ENCODE measurements at regions of chr17 and their contacts with region 1.

Region 1: DNA sequence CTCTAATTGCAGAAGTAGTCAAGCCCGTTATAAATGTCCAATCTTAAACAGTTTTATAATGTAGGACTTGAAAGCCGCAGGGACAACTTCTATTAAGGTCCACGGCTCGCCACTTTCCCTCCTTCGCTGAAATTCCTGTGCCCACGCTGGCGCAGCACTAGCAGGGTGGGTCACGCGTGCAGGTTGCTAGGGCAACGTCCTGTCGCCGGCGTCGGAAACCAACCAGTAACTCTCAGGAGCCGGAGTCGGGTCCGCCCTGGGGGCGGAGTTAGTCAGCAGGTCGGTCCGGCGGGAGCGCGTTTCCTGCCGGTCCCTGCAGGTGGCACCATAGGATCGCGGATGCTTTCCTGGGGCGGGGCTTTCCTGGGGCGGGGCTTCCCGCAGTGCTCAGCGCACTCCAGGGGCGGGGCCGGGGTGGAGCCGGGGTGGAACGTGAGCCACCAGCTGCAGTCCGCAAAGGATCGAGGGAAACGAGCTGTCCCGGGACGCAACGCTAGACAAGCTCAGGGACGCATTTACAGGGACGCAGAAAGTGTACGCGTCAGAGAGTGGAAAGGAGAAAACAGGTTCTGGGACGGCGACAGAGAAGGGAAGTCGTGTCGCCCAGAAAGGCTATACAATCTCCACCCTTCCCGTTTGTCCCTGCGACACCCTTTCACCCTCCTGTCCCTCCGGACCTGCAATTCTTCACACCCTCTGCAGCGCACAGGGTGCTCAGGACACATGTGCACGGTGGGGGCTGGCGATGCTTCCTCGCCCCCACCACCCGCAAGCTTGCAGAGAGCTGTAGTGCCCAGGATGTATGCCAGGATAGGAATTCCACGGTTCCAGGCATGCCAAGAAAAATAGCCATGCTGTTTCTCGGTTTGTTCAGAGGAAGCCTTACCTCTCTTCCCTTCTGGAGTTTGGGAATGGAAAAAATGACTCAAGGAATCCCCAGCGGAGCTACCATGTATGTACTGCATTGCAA is 12.4 kb downstream of the COPZ2 start:
- DNase-seq: peak; percentile 95 to 98 (median 96)
- H3K4me3 ChIP-seq: peak overlapping the region; percentile 53 to 81
- H3K4me3 Mint-ChIP-seq: peak overlapping the region; percentile 84 to 96 (median 92)
- H3K27ac ChIP-seq: peak overlapping the region; percentile 32
- H3K27ac Mint-ChIP-seq: peak overlapping the region; percentile 87 to 98 (median 95)
- H3K4me1 ChIP-seq: peaks cover 36% of the 10 kb centered on the region
- H3K4me1 Mint-ChIP-seq: peaks cover 12 to 38% (median 27%) of the 10 kb centered on the region in 4 donors
- H3K27me3 ChIP-seq: no peaks in the 10 kb centered on the region
- H3K27me3 Mint-ChIP-seq: peaks cover 7 to 16% of the 10 kb centered on the region in 2 donors

Region 2: DNA sequence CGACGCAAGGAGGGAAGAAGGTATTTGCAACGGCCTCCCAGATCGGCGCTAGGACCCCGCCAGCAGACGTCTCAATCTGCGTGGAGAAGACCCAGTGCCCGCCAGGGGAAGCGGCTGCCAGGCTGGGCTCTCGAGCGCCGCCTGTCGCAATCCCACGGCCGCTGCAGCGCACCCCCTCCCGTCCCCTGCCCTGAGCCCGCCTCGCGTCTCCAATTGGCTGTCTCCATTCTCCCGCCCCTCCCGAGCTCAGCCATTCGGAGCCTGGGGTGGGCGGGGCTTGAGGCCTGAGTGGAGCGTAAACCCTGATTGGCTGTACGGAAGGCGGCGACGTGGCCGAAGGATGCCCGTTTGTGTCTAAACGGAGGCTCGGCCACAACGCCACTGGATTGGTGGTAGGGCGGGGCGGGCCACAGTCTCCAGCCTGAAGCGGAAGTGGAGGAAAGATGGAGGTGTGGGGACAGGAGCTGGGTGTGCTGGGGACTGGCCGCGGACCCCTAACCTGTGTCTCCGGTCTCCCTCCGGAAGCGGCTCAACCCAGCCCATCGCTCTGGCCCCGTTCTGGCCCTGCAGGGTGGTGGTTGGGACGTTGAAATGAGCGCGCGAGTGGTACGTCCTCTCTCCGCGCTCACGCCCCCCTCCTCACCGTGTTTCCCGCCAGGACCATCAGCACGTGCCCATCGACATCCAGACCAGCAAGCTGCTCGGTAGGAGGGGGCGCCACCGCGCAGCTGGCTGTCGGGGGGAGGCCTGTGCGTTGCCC is 54.3 kb before region 1 on chr17 and contains the start of gene CDK5RAP3:
- CTCF ChIA-PET with region 1: interaction called, 16 read pairs
- POLR2A ChIA-PET with region 1: interaction called, 5 read pairs
- intact Hi-C with region 1: loop called (anchors 2 kb)
- DNase-seq: peak; percentile 96 to 98 (median 97)
- H3K4me3 ChIP-seq: peak within 1 kb of the TSS; percentile 89 to 95
- H3K4me3 Mint-ChIP-seq: peak within 1 kb of the TSS; percentile 97 to 100 (median 98)
- H3K27ac ChIP-seq: peak within 1 kb of the TSS; percentile 62
- H3K27ac Mint-ChIP-seq: peak within 1 kb of the TSS; percentile 83 to 97 (median 96)
- H3K4me1 ChIP-seq: peaks cover 28% of the 10 kb centered on the region
- H3K4me1 Mint-ChIP-seq: peaks cover 17 to 42% (median 25%) of the 10 kb centered on the region in 4 donors
- H3K27me3 ChIP-seq: no peaks in the 10 kb centered on the region
- H3K27me3 Mint-ChIP-seq: peaks cover 0 to 1% of the 10 kb centered on the region in 2 donors
- total RNA-seq, gene CDK5RAP3: 340 to 343 TPM

Region 3: DNA sequence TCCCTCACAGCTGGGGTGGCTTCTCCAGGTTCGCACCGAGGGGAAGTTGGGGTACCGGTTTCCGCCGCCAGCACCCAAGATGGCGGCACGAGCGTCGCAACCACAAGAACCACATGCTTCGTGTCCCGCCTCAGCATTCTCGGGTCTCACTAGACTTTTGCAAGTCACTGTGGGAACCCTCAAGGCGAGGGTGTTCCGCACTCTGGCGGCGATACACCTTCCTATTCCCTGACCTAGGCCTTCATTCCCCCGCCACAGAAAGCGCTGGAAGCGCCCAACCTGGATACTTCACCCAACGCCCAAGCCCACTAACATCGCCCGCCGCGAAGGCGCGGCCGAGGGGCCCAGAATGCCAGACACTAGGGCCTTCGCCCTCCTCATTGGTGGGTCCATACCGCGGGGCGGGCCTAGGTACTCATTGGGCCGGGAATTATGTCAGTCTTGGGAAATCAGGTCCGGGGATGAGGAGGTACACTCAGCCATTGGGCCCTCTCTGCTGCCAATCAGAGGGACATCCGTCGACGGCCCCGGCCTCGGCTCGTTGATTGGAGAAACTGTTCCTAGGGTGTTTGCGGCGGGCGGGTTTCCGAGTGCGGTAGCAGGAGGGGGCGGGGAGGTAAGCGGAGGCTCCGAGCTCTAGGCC is 22.6 kb after region 1 on chr17 and contains the start of gene NFE2L1:
- CTCF ChIA-PET with region 1: interaction called, 40 read pairs
- POLR2A ChIA-PET with region 1: interaction called, 52 read pairs
- intact Hi-C with region 1: loop called (anchors 1 kb)
- DNase-seq: peak; percentile 98 to 100 (median 98)
- H3K4me3 ChIP-seq: peak within 1 kb of the TSS; percentile 86 to 88
- H3K4me3 Mint-ChIP-seq: peak within 1 kb of the TSS; percentile 94 to 99 (median 96)
- H3K27ac ChIP-seq: peak within 1 kb of the TSS; percentile 76
- H3K27ac Mint-ChIP-seq: peak within 1 kb of the TSS; percentile 94 to 99 (median 99)
- H3K4me1 ChIP-seq: peaks cover 54% of the 10 kb centered on the region
- H3K4me1 Mint-ChIP-seq: peaks cover 29 to 69% (median 49%) of the 10 kb centered on the region in 4 donors
- H3K27me3 ChIP-seq: no peaks in the 10 kb centered on the region
- H3K27me3 Mint-ChIP-seq: no peaks in the 10 kb centered on the region
- total RNA-seq, gene NFE2L1: 53.5 to 62.5 TPM

Region 4: GRCh38 chr17:48084932-48085444 is 59.8 kb after region 1 on chr17:
- CTCF ChIA-PET with region 1: interaction called, 36 read pairs
- POLR2A ChIA-PET with region 1: no interaction called
- intact Hi-C with region 1: no loop called
- DNase-seq: no peak
- H3K4me3 ChIP-seq: no peak overlapping the region
- H3K4me3 Mint-ChIP-seq: no peak overlapping the region
- H3K27ac ChIP-seq: no peak overlapping the region
- H3K27ac Mint-ChIP-seq: no peak overlapping the region
- H3K4me1 ChIP-seq: no peaks in the 10 kb centered on the region
- H3K4me1 Mint-ChIP-seq: peaks cover 7 to 10% (median 9%) of the 10 kb centered on the region in 4 donors
- H3K27me3 ChIP-seq: no peaks in the 10 kb centered on the region
- H3K27me3 Mint-ChIP-seq: no peaks in the 10 kb centered on the region

Region 5: GRCh38 chr17:48335858-48336500 is 310.8 kb after region 1 on chr17:
- CTCF ChIA-PET with region 1: no interaction called
- POLR2A ChIA-PET with region 1: no interaction called
- intact Hi-C with region 1: loop called (anchors 1 kb)
- DNase-seq: peak in 4 of 5 donors; percentile 61 to 70 (median 66)
- H3K4me3 ChIP-seq: no peak overlapping the region
- H3K4me3 Mint-ChIP-seq: no peak overlapping the region
- H3K27ac ChIP-seq: no peak overlapping the region
- H3K27ac Mint-ChIP-seq: peak overlapping the region in 2 of 7 donors; percentile 63 to 65
- H3K4me1 ChIP-seq: no peaks in the 10 kb centered on the region
- H3K4me1 Mint-ChIP-seq: peaks cover 0 to 11% (median 4%) of the 10 kb centered on the region in 4 donors
- H3K27me3 ChIP-seq: no peaks in the 10 kb centered on the region
- H3K27me3 Mint-ChIP-seq: no peaks in the 10 kb centered on the region

Region 6: DNA sequence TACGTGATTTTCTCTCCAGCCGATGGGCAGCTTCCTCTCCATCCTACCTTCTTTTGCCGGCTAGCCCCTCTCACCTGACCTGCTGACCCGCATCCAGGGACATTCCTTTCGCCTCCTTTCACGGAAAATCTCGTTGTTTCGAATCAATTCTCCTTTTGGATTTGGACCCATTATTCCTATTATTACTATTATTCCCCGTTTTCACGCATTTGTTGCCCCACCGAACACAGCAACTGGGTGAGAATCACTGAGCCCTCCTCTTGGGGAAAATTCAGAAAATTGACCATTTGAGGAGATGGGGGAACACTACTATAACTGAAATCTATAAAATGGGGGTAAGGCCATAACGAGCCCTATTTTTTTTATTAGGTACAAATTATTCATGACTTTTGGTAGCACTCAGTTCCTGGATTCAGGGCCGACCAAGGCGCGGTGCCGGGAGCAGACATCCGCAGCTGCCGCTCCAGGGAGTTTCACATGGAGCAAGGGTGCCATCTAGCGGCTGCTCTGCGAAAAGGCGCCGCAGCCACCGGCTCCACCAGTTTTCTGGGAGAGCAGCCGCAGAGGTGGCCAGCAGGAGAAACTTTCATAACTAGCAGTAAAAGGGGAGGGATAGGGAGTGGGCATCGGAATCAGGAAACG is 593.2 kb after region 1 on chr17:
- CTCF ChIA-PET with region 1: interaction called, 19 read pairs
- POLR2A ChIA-PET with region 1: interaction called, 3 read pairs
- intact Hi-C with region 1: loop called (anchors 1 kb)
- DNase-seq: peak; percentile 73 to 84 (median 77)
- H3K4me3 ChIP-seq: no peak overlapping the region
- H3K4me3 Mint-ChIP-seq: peak overlapping the region in 6 of 8 donors; percentile 16 to 59 (median 35)
- H3K27ac ChIP-seq: no peak overlapping the region
- H3K27ac Mint-ChIP-seq: peak overlapping the region in 4 of 7 donors; percentile 75 to 91 (median 80)
- H3K4me1 ChIP-seq: peaks cover 35% of the 10 kb centered on the region
- H3K4me1 Mint-ChIP-seq: peaks cover 17 to 59% (median 30%) of the 10 kb centered on the region in 4 donors
- H3K27me3 ChIP-seq: peaks cover 89% of the 10 kb centered on the region
- H3K27me3 Mint-ChIP-seq: peaks cover 71 to 83% of the 10 kb centered on the region in 2 donors

Measured in CD4-positive, alpha-beta memory T cell (primary cell).